ENCODE measurements at regions of chr14 and their contacts with region 1.

Region 1: DNA sequence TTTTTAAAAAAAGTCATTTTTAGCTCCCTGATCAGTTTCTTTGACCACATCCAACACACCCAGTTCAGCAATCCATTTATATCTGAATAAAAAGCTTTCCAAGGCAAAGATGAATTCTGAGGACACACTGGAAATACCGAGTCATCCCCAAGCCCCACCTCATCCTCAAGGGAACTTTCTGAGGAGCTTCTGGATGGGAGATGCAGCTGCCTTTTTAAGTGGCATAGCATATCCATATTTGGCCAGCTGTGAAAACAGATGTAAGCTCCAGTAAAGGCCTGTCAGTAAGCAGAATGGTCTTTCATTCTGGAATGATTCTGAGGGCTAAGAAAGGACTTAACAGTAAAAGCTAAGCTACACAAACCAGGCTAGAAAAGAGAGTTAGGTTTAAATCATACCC is 18.4 kb downstream of the ZFYVE1 start:
- DNase-seq: no peak
- ATAC-seq: no peak
- H3K4me3 ChIP-seq: no peak overlapping the region
- H3K4me3 Mint-ChIP-seq: no peak overlapping the region
- H3K27ac ChIP-seq: no peak overlapping the region
- H3K27ac Mint-ChIP-seq: no peak overlapping the region
- H3K4me1 ChIP-seq: no peaks in the 10 kb centered on the region
- H3K4me1 Mint-ChIP-seq: peaks cover 4 to 9% (median 8%) of the 10 kb centered on the region in 3 donors
- H3K27me3 ChIP-seq: no peaks in the 10 kb centered on the region
- H3K27me3 Mint-ChIP-seq: no peaks in the 10 kb centered on the region

Region 2: DNA sequence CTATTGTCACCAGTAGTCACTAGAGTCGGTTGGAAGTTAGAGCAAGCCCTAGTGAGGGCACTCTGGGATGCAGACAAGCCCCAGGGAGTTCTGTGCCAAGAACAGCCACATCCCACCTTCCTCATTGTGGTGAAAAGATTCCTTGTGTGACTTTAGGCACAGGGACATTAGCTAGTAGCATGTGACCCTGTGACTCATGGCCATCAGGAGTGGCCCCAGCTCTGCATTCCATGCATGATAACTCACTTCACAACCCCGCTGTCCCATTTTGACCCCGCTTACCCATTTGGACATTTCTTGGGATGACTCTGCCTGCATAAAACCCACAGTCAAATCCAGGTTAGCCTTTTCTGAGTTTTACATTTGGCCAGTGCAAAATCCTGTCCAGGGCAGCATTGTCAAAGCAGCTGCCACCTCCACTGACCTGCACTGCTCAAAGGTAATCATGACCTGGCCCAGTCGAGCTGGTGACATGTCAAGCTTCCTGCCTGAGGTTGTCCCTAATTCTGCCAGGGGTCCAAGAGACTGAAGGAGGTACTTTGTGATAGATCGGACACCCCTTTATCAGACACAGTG is 545.1 kb before region 1 on chr14:
- CTCF ChIA-PET with region 1: no interaction called
- POLR2A ChIA-PET with region 1: no interaction called
- DNase-seq: no peak
- ATAC-seq: no peak
- H3K4me3 ChIP-seq: no peak overlapping the region
- H3K4me3 Mint-ChIP-seq: no peak overlapping the region
- H3K27ac ChIP-seq: no peak overlapping the region
- H3K27ac Mint-ChIP-seq: no peak overlapping the region
- H3K4me1 ChIP-seq: no peaks in the 10 kb centered on the region
- H3K4me1 Mint-ChIP-seq: no peaks in the 10 kb centered on the region
- H3K27me3 ChIP-seq: no peaks in the 10 kb centered on the region
- H3K27me3 Mint-ChIP-seq: no peaks in the 10 kb centered on the region

Region 3: GRCh38 chr14:72942782-72943333 is 65.6 kb before region 1 on chr14:
- CTCF ChIA-PET with region 1: no interaction called
- POLR2A ChIA-PET with region 1: no interaction called
- DNase-seq: no peak
- ATAC-seq: no peak
- H3K4me3 ChIP-seq: no peak overlapping the region
- H3K4me3 Mint-ChIP-seq: no peak overlapping the region
- H3K27ac ChIP-seq: no peak overlapping the region
- H3K27ac Mint-ChIP-seq: no peak overlapping the region
- H3K4me1 ChIP-seq: peaks cover 0 to 2% of the 10 kb centered on the region in 2 experiments
- H3K4me1 Mint-ChIP-seq: peaks cover 2 to 7% (median 2%) of the 10 kb centered on the region in 3 donors
- H3K27me3 ChIP-seq: no peaks in the 10 kb centered on the region
- H3K27me3 Mint-ChIP-seq: no peaks in the 10 kb centered on the region

Region 4: GRCh38 chr14:73818821-73819220 is 810.3 kb after region 1 on chr14:
- CTCF ChIA-PET with region 1: interaction called in 1 of 2 experiments, 12 read pairs
- POLR2A ChIA-PET with region 1: no interaction called
- DNase-seq: no peak
- ATAC-seq: no peak
- H3K4me3 ChIP-seq: no peak overlapping the region
- H3K4me3 Mint-ChIP-seq: no peak overlapping the region
- H3K27ac ChIP-seq: no peak overlapping the region
- H3K27ac Mint-ChIP-seq: no peak overlapping the region
- H3K4me1 ChIP-seq: no peaks in the 10 kb centered on the region
- H3K4me1 Mint-ChIP-seq: peaks cover 0 to 12% (median 0%) of the 10 kb centered on the region in 3 donors
- H3K27me3 ChIP-seq: peaks cover 0 to 2% of the 10 kb centered on the region in 2 experiments
- H3K27me3 Mint-ChIP-seq: no peaks in the 10 kb centered on the region